ENCODE measurements at regions of chr17 and their contacts with region 1.

Region 1: DNA sequence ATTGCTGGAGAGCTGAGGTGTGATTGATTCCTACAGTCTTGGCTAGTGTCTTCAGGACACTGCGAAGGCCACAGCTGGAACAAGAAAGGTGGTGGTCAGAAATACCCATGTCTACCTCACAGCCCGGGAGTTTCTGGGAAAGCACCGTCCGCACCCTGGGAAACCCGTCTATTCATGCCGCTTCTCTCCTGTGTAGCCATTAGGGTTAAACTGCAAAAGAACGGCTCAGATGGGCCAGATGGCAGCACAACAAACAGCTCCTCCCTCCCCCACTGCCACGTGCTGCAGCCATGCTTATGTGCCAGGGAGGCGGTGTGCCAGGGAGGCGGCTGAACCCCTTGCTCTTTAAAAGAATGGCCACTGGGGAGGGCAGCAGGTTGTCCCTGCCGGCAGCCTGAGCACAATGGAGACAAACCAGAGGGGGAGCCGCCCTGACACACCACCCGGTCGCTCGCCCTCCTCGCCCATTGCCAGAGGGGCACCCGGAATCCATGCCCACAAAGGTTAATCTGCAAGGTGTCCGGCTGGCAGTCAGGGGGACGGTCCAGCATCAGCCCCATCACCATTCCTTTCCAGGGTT is 65.2 kb downstream of the CYTH1 start:
- DNase-seq: peak; percentile 45
- H3K4me3 Mint-ChIP-seq: peak overlapping the region; percentile 29
- H3K27ac Mint-ChIP-seq: peak overlapping the region; percentile 85
- H3K4me1 Mint-ChIP-seq: peaks cover 87% of the 10 kb centered on the region
- H3K27me3 Mint-ChIP-seq: no peaks in the 10 kb centered on the region

Region 2: GRCh38 chr17:78501241-78502036 is 215.5 kb before region 1 on chr17:
- CTCF ChIA-PET with region 1: no interaction called
- POLR2A ChIA-PET with region 1: no interaction called
- intact Hi-C with region 1: no loop called
- DNase-seq: no peak
- H3K4me3 Mint-ChIP-seq: no peak overlapping the region
- H3K27ac Mint-ChIP-seq: no peak overlapping the region
- H3K4me1 Mint-ChIP-seq: no peaks in the 10 kb centered on the region
- H3K27me3 Mint-ChIP-seq: no peaks in the 10 kb centered on the region

Region 3: GRCh38 chr17:78736526-78737079 is 19.7 kb after region 1 on chr17:
- CTCF ChIA-PET with region 1: interaction called, 3 read pairs
- POLR2A ChIA-PET with region 1: interaction called, 12 read pairs
- intact Hi-C with region 1: loop called (anchors 2 kb)
- DNase-seq: peak; percentile 80
- H3K4me3 Mint-ChIP-seq: peak overlapping the region; percentile 82
- H3K27ac Mint-ChIP-seq: peak overlapping the region; percentile 94
- H3K4me1 Mint-ChIP-seq: peaks cover 90% of the 10 kb centered on the region
- H3K27me3 Mint-ChIP-seq: no peaks in the 10 kb centered on the region

Region 4: DNA sequence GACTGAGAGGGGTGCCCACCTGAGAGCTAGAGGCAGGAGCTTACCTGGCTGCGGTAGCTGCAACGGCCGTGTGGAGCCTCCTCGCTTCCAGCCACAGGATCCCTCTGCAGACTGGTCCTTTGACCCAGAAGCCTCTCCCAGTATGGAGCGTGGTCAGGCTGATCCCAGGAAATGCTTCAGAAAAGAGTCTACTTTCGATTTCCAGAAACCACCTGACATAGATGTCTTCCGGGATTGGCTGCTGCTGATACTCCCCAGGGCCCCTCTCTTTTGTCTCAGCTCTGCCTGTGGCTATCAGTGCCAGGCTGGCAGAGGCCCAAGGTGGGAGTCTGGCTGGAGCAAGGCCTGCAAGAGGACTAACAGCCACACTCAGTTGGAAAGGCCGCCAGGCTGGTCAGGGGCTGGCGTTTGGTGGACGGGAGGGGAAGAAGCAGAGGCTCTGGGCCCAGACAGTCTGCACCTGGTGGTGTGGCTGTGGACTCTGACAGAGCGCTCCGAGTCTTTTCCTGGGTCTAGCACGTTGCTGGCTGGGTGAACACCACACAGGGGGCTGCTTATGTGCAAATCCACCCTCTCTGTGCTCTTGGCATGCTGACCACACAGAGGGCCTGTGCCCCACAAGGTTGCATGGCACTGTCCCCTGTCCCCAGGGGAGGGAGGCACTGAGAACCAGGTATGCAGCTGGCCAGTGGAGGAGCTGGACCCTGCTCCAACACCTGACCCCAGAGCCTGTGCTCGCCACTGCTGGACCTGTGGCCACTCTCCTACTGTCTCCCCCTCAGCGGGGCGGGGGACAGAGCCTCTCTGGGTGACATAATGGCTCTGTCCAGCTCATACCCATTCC is 263.1 kb after region 1 on chr17 and contains the start of gene LGALS3BP:
- CTCF ChIA-PET with region 1: no interaction called
- POLR2A ChIA-PET with region 1: no interaction called
- intact Hi-C with region 1: loop called (anchors 10 kb)
- DNase-seq: peak; percentile 50
- H3K4me3 Mint-ChIP-seq: peak within 1 kb of the TSS; percentile 67
- H3K27ac Mint-ChIP-seq: peak within 1 kb of the TSS; percentile 58
- H3K4me1 Mint-ChIP-seq: peaks cover 15% of the 10 kb centered on the region
- H3K27me3 Mint-ChIP-seq: no peaks in the 10 kb centered on the region
- total RNA-seq, gene LGALS3BP: 48.0 to 49.5 TPM

Measured in activated CD4-positive, alpha-beta memory T cell treated with anti-CD3 and anti-CD28 coated beads for 36 hours (primary cell).